H1 (cell line): ENCODE measurements at regions of chr12 and their contacts with region 1.

Region 1: GRCh38 chr12:7970475-7971252 is 34.7 kb upstream of the SLC2A3 start:
- DNase-seq: peak; percentile 88 to 92
- H3K4me3 ChIP-seq: peak overlapping the region; percentile 12 to 60 (median 32)
- H3K27ac ChIP-seq: peak overlapping the region; percentile 83
- H3K4me1 ChIP-seq: peaks cover 0 to 7% (median 3%) of the 10 kb centered on the region in 4 experiments; a peak in 3 of 7 replicates
- H3K27me3 ChIP-seq: no peaks in the 10 kb centered on the region
- CTCF ChIP-seq: no peak
- EP300 ChIP-seq: peak; percentile 24 to 89; a peak in 2 of 3 replicates
- POLR2A ChIP-seq: peak; percentile 25 to 82
- RAD21 ChIP-seq: 0 out of 4 replicates have a peak, but pooled peaks of 1 of the 2 experiments have one; percentile 1

Region 2: GRCh38 chr12:7832059-7832696 is 138.5 kb before region 1 on chr12:
- CTCF ChIA-PET with region 1: no interaction called
- POLR2A ChIA-PET with region 1: no interaction called
- DNase-seq: no peak
- H3K4me3 ChIP-seq: no peak overlapping the region
- H3K27ac ChIP-seq: no peak overlapping the region
- H3K4me1 ChIP-seq: no peaks in the 10 kb centered on the region; a peak in 1 of 7 replicates
- H3K27me3 ChIP-seq: no peaks in the 10 kb centered on the region
- CTCF ChIP-seq: peak; percentile 36 to 81 (median 65)
- EP300 ChIP-seq: no peak
- POLR2A ChIP-seq: no peak
- RAD21 ChIP-seq: peak; percentile 72 to 78

Region 3: GRCh38 chr12:7959701-7960121 is 11.0 kb before region 1 on chr12:
- CTCF ChIA-PET with region 1: interaction called, 12 read pairs
- POLR2A ChIA-PET with region 1: interaction called, 9 read pairs
- DNase-seq: peak in 1 of 2 experiments; percentile 74
- H3K4me3 ChIP-seq: peak overlapping the region; percentile 11 to 63 (median 41); a peak in 5 of 8 replicates
- H3K27ac ChIP-seq: peak overlapping the region; percentile 57; the same call in 1 of the 2 replicates
- H3K4me1 ChIP-seq: peaks cover 0 to 6% (median 3%) of the 10 kb centered on the region in 4 experiments; a peak in 6 of 7 replicates
- H3K27me3 ChIP-seq: no peaks in the 10 kb centered on the region
- CTCF ChIP-seq: no peak
- EP300 ChIP-seq: no peak
- POLR2A ChIP-seq: 0 out of 3 replicates have a peak, but pooled peaks of 1 of the 2 experiments have one; percentile 31
- RAD21 ChIP-seq: peak in 1 of 2 experiments; percentile 4; a peak in 1 of 4 replicates

Region 4: GRCh38 chr12:7995266-7995963 is 24.8 kb after region 1 on chr12:
- CTCF ChIA-PET with region 1: interaction called, 16 read pairs
- POLR2A ChIA-PET with region 1: interaction called, 7 read pairs
- DNase-seq: peak; percentile 38 to 74
- H3K4me3 ChIP-seq: no peak overlapping the region
- H3K27ac ChIP-seq: no peak overlapping the region
- H3K4me1 ChIP-seq: peaks cover 0 to 6% (median 2%) of the 10 kb centered on the region in 4 experiments; a peak in 5 of 7 replicates
- H3K27me3 ChIP-seq: no peaks in the 10 kb centered on the region
- CTCF ChIP-seq: peak; percentile 52 to 85 (median 75)
- EP300 ChIP-seq: no peak
- POLR2A ChIP-seq: no peak
- RAD21 ChIP-seq: peak; percentile 81

Region 5: GRCh38 chr12:8045952-8046944 is 75.6 kb after region 1 on chr12:
- CTCF ChIA-PET with region 1: no interaction called
- POLR2A ChIA-PET with region 1: no interaction called
- DNase-seq: peak in 1 of 2 experiments; percentile 91
- H3K4me3 ChIP-seq: no peak overlapping the region
- H3K27ac ChIP-seq: no peak overlapping the region
- H3K4me1 ChIP-seq: no peaks in the 10 kb centered on the region
- H3K27me3 ChIP-seq: no peaks in the 10 kb centered on the region
- CTCF ChIP-seq: peak; percentile 81 to 91 (median 84)
- EP300 ChIP-seq: no peak
- POLR2A ChIP-seq: no peak
- RAD21 ChIP-seq: peak; percentile 63 to 71